AG04449 (cell line): ENCODE measurements at regions of chr9 and their contacts with region 1.

Region 1: DNA sequence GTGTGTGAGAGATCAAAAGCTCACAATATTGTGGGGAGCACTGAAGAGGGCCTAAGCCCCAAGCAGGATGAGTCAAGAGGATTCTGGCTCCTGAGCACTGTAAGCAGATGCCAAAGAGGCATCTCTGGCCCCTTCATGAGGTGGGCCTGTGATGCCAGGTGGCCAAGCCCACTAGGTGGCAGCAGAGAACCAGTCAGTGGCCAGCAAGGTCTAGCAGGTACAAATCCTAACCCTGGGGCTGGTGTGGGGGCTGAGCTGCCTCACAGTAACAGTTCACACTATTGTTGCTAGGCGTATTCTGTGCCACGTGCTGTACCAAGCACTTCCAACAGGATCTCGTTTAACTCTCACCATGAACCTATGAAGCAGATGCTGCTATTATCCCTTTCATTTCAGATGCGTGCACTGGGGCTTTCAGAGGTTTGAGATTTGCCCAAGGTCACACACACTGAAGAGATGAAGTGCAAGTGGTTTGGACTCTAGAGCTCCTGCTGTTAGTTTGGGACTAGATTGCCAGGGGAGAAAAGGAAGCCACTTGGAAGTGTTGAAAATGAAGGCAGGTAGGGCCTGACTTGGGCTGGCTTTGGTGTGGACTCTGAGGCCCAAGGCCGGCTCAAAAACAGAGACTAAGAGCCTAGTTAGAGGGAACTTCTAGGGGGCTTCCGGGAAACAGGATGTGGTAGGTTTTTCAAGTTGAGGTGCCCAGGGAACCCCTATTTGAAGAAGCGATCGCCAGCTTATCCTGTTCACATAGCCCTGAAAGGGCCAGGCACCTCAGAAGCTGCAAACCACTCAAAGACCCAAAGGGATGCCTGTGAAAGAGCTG is 4.4 kb upstream of the MLANA start:
- DNase-seq: no peak
- H3K4me3 ChIP-seq: no peak overlapping the region
- CTCF ChIP-seq: peak; percentile 95

Region 2: GRCh38 chr9:5743109-5743508 is 143.2 kb before region 1 on chr9:
- CTCF ChIA-PET with region 1: no interaction called
- POLR2A ChIA-PET with region 1: no interaction called
- DNase-seq: no peak
- H3K4me3 ChIP-seq: no peak overlapping the region
- CTCF ChIP-seq: no peak

Region 3: DNA sequence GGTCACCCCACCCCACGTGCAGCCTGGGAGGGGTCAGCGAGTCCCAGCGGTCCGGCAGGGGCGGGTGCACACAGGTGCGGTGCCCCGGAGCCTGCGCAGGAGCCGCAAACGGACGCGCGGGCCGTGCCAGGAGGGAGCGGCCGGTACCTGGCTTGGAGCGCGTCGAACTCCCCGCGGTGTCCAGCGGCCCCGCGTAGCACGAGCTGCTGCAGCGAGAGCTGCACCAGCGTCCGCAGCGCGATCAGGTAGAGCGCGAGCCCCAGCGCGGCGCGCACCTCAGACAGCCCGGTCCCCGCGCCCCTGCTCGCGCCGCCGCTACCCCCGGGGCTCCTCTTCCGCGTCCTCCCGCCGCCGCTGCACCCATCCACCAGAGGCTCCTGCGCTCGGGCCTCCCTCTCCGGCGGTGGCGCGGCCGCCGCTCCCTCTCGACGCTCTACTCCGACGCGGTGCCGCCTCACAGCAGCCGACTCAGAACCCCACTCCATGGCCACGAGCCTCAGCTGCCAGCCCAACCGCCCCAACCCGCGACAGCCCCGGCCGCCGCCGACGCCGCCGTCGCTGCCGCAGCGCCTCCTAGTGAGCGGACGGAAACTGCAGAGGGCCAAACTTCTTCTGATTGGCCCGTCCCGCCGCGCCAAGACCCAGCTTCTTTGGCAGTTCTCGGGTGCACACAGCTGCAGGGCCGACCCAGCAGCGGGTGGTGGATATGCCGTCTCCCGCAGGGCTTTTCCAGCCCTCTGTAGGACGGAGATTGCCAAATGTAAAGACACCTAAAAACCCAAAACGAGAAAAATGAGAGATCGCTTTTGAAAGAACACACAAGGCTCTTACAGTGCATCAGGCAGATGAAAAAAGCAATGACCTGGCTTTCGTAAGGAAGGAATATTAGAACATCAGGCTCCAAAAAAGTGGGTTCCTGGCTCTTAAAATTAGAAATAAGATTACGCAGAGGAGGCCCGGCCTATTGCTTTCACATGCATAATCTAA is 53.5 kb before region 1 on chr9 and contains the start of gene ERMP1:
- CTCF ChIA-PET with region 1: interaction called, 26 read pairs
- POLR2A ChIA-PET with region 1: no interaction called
- DNase-seq: peak; percentile 7
- H3K4me3 ChIP-seq: peak within 1 kb of the TSS; percentile 64
- CTCF ChIP-seq: peak; percentile 85

Region 4: DNA sequence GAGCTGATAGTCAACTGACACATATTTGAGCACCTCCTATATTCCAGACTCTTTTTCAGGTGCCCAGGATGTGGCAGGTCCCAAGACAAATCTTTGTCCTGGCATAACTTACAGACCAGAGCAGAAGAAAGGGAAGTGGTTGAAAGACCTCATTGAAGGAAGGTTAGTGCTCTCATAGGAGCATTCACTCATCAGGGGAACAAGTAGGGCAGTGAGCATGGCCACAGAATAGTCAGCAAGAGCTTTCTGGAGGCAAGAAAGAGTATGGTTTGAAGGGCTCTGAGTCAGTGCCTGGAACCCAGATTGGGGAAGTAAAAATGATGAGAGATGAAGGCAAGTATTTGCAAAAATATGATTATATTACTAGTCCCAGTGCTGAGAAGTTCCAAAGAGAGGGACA is 28.4 kb before region 1 on chr9:
- CTCF ChIA-PET with region 1: interaction called, 17 read pairs
- POLR2A ChIA-PET with region 1: no interaction called
- DNase-seq: no peak
- H3K4me3 ChIP-seq: no peak overlapping the region
- CTCF ChIP-seq: no peak

Region 5: GRCh38 chr9:5869315-5870019 is 16.9 kb before region 1 on chr9:
- CTCF ChIA-PET with region 1: interaction called, 69 read pairs
- POLR2A ChIA-PET with region 1: no interaction called
- DNase-seq: no peak
- H3K4me3 ChIP-seq: no peak overlapping the region
- CTCF ChIP-seq: peak; percentile 32

Region 6: DNA sequence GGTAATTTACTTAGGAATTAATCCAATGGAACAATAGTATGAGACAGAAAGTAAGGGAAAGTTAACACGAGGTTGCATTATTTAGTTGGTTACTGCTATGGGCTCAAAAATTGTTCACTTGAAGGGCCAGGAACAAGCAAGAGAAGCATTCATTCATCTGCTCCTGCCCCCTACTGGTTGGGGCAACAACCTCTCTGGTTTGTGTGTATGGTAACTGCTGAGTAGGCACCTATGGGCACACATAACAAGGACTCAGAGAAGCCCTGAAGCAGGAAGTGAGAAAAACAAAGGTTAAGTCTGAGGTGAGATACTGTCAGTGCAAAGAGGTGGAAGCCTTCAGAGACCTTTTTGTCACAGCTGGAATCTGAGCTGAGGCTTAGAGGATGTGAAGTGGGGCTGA is 163.5 kb after region 1 on chr9:
- CTCF ChIA-PET with region 1: interaction called, 118 read pairs
- POLR2A ChIA-PET with region 1: no interaction called
- DNase-seq: no peak
- H3K4me3 ChIP-seq: no peak overlapping the region
- CTCF ChIP-seq: peak; percentile 5

Region 7: DNA sequence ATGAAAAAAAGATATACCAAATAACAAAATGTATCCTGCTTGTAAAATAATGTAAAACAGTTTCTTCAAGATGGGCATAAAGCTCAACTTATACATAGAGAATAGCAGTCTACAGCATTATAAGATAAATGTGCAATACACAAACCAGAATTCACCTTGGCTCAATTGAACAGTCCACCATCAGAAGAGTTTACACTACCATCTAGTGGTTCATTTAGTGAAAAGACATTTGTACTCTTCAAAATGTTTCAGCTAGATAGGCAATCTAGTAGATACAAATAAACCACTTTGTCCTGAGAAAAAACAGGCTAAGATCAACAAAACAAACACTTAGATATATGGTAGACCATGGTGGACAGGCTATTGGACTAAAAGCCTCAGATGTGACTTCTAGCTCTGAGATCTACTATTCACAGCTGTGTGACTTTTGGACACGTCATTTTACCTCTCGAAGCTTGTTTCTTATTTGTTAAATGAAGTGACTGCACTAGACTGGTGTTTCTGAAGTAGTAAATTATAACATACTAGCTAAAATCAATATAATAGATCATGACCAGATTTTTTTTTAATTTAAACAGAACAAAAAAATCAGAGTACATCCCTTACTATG is 419.7 kb after region 1 on chr9:
- CTCF ChIA-PET with region 1: interaction called, 41 read pairs
- POLR2A ChIA-PET with region 1: no interaction called
- DNase-seq: no peak
- H3K4me3 ChIP-seq: no peak overlapping the region
- CTCF ChIP-seq: peak; percentile 28

Region 8: GRCh38 chr9:6525326-6526045 is 639.2 kb after region 1 on chr9:
- CTCF ChIA-PET with region 1: no interaction called
- POLR2A ChIA-PET with region 1: no interaction called
- DNase-seq: peak; percentile 38
- H3K4me3 ChIP-seq: no peak overlapping the region
- CTCF ChIP-seq: no peak